Lower lobe of right lung (tissue), 2 donors: ENCODE measurements at regions of chr7 and their contacts with region 1.

Region 1: DNA sequence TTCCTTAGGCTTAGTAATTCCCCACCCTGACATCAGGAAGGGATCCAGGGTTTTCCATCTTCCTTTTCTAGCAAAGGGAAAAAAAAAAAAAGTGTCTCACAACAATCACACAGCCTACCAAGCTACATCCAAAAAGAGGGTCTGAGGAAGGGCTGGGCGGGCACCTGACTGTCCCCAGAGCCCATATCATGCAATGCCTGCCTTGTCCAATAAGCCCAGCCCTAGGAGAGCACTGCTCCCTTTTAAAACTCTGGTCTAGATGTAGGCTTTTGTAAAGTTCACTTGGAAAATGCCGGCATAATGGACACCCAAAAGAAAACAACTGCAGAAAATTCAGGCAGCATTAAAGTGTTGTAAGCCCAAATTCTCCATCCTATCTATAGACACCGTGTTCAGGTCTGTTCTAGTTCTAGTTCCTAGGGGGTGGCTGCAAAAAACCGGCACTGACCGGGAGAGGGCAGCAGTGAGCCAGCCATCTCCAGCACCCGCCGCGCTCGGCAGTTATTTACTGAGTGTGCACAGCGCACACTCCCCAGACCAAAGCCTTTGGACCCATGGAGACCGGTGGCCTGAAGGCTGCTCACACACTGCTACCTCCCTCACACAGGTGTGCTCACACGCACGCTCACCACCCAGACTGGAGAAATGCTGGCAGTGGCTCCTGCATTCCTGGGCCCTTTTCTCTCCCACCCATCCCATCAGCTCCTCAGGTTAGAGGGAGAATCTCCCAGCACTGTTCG is 48.7 kb downstream of the PODXL start:
- DNase-seq: peak; percentile 84
- ATAC-seq: peak; percentile 83 to 86
- H3K4me3 ChIP-seq: no peak overlapping the region
- H3K27ac ChIP-seq: no peak overlapping the region
- H3K4me1 ChIP-seq: peaks cover 28% of the 10 kb centered on the region
- H3K27me3 ChIP-seq: no peaks in the 10 kb centered on the region
- CTCF ChIP-seq: peak; percentile 88

Region 2: DNA sequence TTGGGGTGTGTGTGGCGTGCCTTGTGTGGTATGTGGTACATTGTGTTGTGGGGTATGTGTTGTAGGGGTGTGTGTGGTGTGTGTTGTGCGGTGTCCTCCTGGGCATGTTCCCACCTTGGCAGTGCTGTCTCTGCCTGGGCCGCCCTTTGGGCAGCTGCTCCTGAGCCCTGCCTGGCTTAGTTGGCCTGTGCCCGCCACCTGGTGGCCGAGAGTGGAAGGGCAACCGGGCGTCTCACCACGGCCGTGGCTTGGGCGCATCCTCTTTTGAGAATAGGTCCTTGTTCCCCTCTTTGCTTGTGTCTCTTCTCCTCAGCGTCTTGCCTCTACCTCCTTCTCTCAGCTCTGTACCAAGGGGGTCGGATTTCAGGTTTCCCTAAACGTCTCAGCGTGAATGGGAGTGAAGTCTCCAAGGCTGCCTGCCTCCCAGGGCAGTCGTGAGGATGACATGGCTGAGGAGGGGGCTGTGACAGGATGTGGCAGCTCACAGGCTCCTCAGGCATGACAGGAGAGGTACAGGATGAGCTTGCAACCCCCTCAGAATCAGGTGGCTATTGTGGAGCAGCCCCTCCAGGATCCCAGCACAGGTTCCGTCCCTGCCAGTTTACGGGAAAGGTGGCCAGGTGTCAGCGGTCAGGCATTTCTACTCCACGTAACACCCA is 147.0 kb after region 1 on chr7:
- intact Hi-C with region 1: loop called (anchors 10 kb)
- DNase-seq: peak; percentile 87
- ATAC-seq: peak; percentile 91 to 94
- H3K4me3 ChIP-seq: no peak overlapping the region
- H3K27ac ChIP-seq: no peak overlapping the region
- H3K4me1 ChIP-seq: no peaks in the 10 kb centered on the region
- H3K27me3 ChIP-seq: no peaks in the 10 kb centered on the region
- CTCF ChIP-seq: peak; percentile 88